Heart left ventricle (tissue), 16 donors: ENCODE measurements at regions of chr1 and their contacts with region 1.

Region 1: GRCh38 chr1:181424786-181425403 is 58.4 kb upstream of the CACNA1E start:
- DNase-seq: peak; percentile 20 to 76 (median 60)
- ATAC-seq: peak in 3 of 4 donors; percentile 23 to 68 (median 27)
- H3K4me3 ChIP-seq: no peak overlapping the region
- H3K27ac ChIP-seq: no peak overlapping the region
- H3K4me1 ChIP-seq: peaks cover 0 to 4% (median 0%) of the 10 kb centered on the region in 12 donors
- H3K27me3 ChIP-seq: peaks cover 0 to 17% (median 3%) of the 10 kb centered on the region in 9 donors
- CTCF ChIP-seq: peak; percentile 91 to 99 (median 96)
- POLR2A ChIP-seq: no peak

Region 2: DNA sequence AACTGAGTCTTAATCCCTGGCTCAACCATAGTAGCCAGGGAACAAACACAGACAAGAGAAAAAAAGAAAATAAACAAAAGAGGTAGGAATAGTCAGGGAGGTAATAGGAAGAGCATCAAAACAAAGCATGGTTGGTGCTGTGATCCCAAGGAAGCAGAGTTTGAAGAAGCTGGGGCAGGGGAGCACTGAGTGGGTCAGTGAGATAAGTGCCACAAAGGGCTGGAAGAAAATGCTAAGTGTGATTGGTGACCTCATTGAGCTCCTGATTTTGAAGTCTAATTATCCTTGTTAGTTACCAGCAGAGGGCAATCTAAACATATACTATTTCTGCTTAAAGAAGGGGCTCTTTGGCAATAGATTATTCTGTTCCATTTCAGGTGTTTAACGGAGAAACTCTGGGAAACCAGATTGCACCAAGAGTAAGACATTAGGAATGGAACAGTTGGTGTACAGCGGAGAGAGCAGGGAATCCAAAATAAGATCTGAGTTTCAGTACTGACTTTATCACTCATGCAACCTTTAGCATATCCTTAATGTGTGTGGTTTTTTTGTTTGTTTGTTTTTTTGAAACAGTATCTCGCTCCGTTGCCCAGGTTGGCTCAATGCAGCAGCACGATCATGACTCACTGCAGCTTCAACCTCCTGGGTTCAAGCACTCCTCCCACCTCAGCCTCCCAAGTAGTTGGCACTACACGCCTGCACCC is 542.9 kb before region 1 on chr1:
- intact Hi-C with region 1: loop called in 1 of 10 experiments (anchors 10 kb)
- DNase-seq: no peak
- ATAC-seq: peak in 3 of 4 donors; percentile 45 to 69 (median 55)
- H3K4me3 ChIP-seq: no peak overlapping the region
- H3K27ac ChIP-seq: peak overlapping the region in 1 of 12 donors; percentile 33
- H3K4me1 ChIP-seq: peaks cover 0 to 8% (median 0%) of the 10 kb centered on the region in 12 donors
- H3K27me3 ChIP-seq: no peaks in the 10 kb centered on the region
- CTCF ChIP-seq: peak in 11 of 12 donors; percentile 28 to 63 (median 47)
- POLR2A ChIP-seq: no peak

Region 3: GRCh38 chr1:180912801-180913565 is 511.9 kb before region 1 on chr1 and contains the start of gene KIAA1614:
- intact Hi-C with region 1: loop called in 1 of 10 experiments (anchors 10 kb)
- DNase-seq: peak; percentile 49 to 75 (median 54)
- ATAC-seq: peak; percentile 16 to 83 (median 73)
- H3K4me3 ChIP-seq: peak within 1 kb of the TSS; percentile 52 to 88 (median 70)
- H3K27ac ChIP-seq: peak within 1 kb of the TSS; percentile 82 to 94 (median 88)
- H3K4me1 ChIP-seq: peaks cover 0 to 32% (median 15%) of the 10 kb centered on the region in 12 donors
- H3K27me3 ChIP-seq: peaks cover 0 to 18% (median 0%) of the 10 kb centered on the region in 9 donors
- CTCF ChIP-seq: no peak
- POLR2A ChIP-seq: no peak
- total RNA-seq, gene KIAA1614: 4.3 to 12.1 (median 6.5) TPM

Region 4: DNA sequence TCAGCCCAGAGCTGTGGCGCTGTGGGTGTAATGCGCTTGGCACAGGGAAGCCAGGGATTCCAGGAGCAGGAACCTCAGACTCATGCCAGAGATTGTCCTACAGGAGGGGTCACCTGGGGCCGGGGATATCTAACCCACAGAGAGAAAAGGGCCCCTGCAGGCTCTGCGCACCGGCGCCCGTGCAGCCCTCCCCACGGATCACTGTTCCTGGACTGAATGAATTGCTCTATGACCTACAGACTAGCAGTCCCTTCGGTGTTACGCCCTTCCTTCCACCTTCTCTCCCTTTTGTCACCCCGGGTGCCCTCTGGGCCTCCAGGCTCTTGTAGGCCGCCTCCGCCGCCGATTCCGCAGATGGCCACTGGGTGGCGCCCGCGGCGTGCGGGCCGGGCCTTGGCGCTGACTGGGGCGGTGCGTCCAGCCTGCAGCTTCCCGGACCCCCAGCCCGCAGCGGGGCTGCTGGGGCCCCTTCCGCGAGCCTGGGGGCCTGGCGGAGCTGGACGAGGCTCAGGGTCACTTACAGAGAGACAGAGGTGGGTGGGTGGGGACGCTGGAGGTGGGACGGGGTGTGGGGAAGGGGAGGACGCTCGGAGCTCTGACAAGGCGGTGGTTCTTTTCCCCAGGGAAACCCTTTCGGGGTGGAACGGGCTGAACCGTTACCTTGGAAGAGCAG is 235.1 kb before region 1 on chr1:
- intact Hi-C with region 1: loop called (anchors 1 to 2 kb)
- DNase-seq: peak; percentile 46 to 77 (median 58)
- ATAC-seq: peak; percentile 72 to 93 (median 87)
- H3K4me3 ChIP-seq: peak overlapping the region in 10 of 12 donors; percentile 14 to 40 (median 34)
- H3K27ac ChIP-seq: peak overlapping the region in 1 of 12 donors; percentile 3
- H3K4me1 ChIP-seq: peaks cover 0 to 11% (median 5%) of the 10 kb centered on the region in 12 donors
- H3K27me3 ChIP-seq: peaks cover 0 to 17% (median 0%) of the 10 kb centered on the region in 9 donors
- CTCF ChIP-seq: peak; percentile 90 to 98 (median 94)
- POLR2A ChIP-seq: no peak